Activated CD8-positive, alpha-beta memory T cell treated with anti-CD3 and anti-CD28 coated beads, Interleukin-2, amount 10 ng/mL, durations not matched to agents 7 days and 5 days (primary cell): ENCODE measurements at regions of chr20 and their contacts with region 1.

Region 1: GRCh38 chr20:1734269-1734858 is 76.8 kb upstream of the SIRPG start:
- DNase-seq: peak; percentile 61
- ATAC-seq: peak; percentile 83
- H3K4me3 Mint-ChIP-seq: no peak overlapping the region
- H3K27ac Mint-ChIP-seq: no peak overlapping the region
- H3K4me1 Mint-ChIP-seq: peaks cover 22% of the 10 kb centered on the region
- H3K27me3 Mint-ChIP-seq: no peaks in the 10 kb centered on the region

Region 2: DNA sequence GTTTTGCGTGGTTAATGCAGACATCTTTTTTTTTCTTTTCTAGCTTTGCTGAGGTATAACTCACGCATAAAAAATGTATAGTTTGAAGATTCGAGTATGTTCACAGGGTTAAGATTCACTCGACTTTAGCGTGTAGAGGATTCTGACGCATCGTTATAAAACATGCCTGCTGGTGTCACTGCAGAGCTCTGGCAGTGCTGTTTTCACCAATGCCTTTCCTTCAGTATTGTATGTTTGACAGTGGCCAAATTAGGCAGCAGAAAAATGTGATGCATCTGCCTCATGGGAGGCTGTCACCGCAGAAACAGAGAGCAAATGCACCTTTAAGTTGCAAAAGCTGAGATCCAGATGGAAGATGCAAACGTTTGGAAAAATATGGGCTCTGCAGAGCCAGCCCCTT is 225.1 kb before region 1 on chr20:
- CTCF ChIA-PET with region 1: interaction called, 35 read pairs
- DNase-seq: no peak
- ATAC-seq: no peak
- H3K4me3 Mint-ChIP-seq: no peak overlapping the region
- H3K27ac Mint-ChIP-seq: no peak overlapping the region
- H3K4me1 Mint-ChIP-seq: no peaks in the 10 kb centered on the region
- H3K27me3 Mint-ChIP-seq: peaks cover 50% of the 10 kb centered on the region

Region 3: DNA sequence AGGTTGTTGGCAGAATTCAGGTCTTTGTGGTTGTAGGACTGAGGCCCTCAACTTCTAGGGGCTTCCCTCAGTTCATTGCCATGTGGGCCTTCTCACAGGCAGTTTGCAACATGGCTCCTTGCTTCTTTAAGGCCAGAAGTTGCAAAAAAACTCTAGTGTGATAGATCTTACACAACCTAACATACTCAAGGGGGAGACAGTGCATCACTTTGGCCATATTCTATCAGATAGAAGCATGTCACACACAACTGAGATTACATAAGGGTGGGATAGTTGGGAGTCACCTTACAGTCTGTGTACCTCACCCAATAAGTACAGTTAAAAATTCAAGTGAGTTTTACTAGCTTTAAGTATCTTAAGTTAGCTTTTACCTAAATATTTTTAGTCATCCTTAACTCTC is 178.4 kb before region 1 on chr20:
- CTCF ChIA-PET with region 1: interaction called, 16 read pairs
- DNase-seq: no peak
- ATAC-seq: no peak
- H3K4me3 Mint-ChIP-seq: no peak overlapping the region
- H3K27ac Mint-ChIP-seq: no peak overlapping the region
- H3K4me1 Mint-ChIP-seq: peaks cover 2% of the 10 kb centered on the region
- H3K27me3 Mint-ChIP-seq: no peaks in the 10 kb centered on the region

Region 4: DNA sequence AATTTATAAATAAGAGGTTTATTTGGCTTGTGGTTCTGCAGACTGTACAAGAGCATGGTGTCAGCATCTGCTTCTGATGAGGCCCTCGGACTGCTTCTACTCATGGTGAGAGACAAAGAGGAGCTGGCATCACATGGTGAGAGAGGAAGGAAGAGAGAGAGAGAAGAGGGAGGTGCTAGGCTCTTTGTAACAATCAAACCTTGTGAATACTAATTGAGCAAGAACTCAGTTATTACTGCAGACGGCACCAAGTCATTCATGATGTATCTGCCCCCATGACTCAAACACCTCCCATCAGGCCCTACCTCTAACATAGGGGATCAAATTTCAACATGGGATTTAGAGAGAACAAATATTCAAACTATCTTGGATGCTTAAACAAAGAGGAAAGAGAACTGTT is 70.4 kb before region 1 on chr20:
- CTCF ChIA-PET with region 1: interaction called, 10 read pairs
- DNase-seq: no peak
- ATAC-seq: peak; percentile 9
- H3K4me3 Mint-ChIP-seq: no peak overlapping the region
- H3K27ac Mint-ChIP-seq: peak overlapping the region; percentile 85
- H3K4me1 Mint-ChIP-seq: peaks cover 94% of the 10 kb centered on the region
- H3K27me3 Mint-ChIP-seq: no peaks in the 10 kb centered on the region